Right ventricle myocardium inferior (tissue), 1 donor: ENCODE measurements at regions of chr15 and their contacts with region 1.

Region 1: GRCh38 chr15:68252925-68253534 is 23.5 kb upstream of the CLN6 start:
- DNase-seq: no peak
- ATAC-seq: peak; percentile 37

Region 2: DNA sequence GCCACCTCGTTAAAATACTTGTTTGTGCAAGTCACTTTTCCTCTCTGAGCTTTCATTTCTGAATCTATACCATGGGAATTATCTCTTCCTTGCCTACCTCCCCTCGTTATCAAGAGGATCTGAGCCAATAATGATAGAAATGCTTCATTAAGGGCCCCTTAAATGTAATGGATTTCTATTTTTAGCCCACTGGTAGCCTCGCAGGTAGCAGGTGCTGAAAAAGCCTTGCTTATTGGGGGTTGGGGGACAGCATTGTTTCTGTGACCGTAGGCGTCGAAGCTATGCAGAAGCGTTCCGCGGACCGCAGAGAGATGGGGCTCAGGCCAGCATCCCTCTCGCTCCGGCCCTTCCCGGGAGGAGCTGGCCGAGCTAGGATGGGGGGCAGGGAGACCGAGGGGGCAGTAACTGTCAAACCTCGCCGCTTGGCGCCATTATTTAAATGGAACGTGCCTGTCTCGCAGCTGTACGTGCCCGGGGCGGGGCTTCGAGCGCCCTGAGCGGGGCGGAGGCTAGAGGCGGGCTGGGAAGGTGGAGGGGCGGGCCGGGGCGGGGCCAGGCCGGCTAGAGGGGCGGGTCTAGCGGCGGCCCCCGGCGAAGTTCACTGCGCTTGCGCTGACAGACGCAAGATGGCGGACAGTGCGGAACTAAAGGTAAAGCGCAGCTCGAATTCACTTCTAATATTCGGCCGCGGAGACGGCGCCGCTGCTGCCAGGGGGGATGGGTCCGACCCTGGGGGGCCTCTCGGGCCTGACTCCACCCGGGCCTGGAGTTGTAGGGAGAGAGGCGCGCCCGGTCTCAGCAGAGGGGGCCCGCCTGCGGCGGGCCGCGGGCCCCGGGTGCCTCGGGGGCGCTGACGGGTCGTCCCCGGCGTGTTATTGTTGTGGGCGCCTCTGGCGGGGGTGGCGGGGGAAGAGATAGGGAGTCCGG is 199.1 kb before region 1 on chr15 and contains the start of gene PIAS1:
- intact Hi-C with region 1: no loop called
- DNase-seq: peak; percentile 99
- ATAC-seq: peak; percentile 99
- total RNA-seq, gene PIAS1: 26.1 TPM

Region 3: DNA sequence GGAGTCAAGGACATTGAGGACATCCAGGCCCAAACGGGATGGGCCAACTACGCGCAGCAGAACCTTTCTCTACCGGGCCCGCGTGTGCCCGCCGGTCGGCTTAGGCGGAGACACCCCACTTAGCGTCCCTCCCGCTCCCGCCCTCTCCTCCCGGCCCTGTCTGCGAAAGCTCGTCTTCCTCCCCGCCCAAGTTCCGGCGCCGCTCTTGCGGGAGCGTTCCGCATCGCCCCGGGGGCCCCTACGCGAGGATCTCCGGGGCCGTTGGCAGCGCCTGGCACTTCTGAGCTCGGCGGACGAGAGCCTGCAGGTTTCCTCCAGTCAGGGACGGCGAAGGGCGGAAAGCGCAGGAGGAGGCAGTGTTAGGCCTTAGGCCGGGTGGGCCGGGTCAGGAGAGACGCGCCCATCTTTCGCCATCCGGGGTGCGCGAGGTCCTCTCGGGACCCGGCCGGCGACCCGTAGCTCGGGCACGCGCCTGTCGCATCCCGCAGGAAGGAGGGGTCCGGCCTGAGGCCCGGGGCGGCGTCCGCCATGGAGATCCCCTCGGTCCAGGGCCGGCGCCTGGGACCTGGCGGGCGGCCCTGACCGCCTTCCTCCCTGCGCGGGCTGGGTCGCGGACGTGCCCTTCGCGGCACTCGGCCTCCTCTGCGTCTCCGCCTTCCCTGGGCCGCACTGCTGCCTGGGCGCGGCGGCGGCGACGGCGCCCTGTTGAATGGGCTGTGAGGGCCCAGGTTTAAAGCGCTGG is 24.7 kb after region 1 on chr15 and contains the start of gene FEM1B:
- intact Hi-C with region 1: loop called (anchors 1 kb)
- DNase-seq: peak; percentile 95
- ATAC-seq: peak; percentile 94
- total RNA-seq, gene FEM1B: 48.9 TPM

Region 4: GRCh38 chr15:68304589-68305337 is 51.7 kb after region 1 on chr15:
- intact Hi-C with region 1: loop called (anchors 5 kb)
- DNase-seq: no peak
- ATAC-seq: no peak

Region 5: GRCh38 chr15:68352401-68353062 is 99.5 kb after region 1 on chr15:
- intact Hi-C with region 1: no loop called
- DNase-seq: no peak
- ATAC-seq: peak; percentile 11

Region 6: DNA sequence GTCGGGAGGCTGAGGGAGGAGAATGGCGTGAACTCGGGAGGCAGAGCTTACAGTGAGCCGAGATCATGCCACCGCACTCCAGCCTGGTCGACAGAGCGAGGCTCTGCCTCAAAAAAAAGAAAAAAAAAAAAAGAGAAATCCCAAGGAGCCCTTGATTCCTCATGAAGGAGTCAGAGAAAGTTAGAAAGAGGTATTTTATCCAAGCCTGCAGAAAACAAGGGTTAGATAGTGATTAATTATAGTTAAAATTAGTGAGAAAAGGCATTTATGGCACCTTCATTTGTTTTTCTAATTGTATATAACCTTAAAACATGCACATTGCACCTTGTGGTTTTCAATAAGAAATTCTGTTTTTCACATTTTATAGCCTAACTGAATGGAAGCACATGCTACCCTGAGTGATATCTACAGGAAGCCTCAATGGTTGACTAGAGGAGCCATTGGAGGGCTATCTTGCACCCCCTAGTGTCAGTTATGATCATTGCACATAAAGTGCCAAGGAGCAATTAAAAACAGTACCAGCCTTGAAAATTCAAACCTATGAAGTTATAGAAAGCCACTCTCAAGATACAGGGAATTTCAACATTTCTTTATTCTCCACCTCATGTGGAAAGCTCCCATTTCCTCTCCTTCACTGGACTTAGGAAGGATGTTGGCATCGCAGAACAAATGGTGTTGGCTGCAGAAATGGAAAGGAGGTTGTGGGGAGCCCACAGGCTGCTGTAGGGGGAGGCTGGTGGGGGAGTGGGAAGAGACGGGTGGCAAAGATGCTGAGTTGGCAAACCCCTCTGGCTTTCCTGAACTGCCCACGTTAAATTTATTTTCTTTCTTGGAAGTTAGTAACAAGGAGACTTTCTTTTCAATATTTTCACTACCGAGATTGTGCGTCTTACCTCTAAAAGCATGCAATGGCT is 130.4 kb after region 1 on chr15:
- intact Hi-C with region 1: loop called (anchors 2 kb)
- DNase-seq: no peak
- ATAC-seq: peak; percentile 69